Prostate gland (tissue), 2 donors: ENCODE measurements at regions of chr2 and their contacts with region 1.

Region 1: DNA sequence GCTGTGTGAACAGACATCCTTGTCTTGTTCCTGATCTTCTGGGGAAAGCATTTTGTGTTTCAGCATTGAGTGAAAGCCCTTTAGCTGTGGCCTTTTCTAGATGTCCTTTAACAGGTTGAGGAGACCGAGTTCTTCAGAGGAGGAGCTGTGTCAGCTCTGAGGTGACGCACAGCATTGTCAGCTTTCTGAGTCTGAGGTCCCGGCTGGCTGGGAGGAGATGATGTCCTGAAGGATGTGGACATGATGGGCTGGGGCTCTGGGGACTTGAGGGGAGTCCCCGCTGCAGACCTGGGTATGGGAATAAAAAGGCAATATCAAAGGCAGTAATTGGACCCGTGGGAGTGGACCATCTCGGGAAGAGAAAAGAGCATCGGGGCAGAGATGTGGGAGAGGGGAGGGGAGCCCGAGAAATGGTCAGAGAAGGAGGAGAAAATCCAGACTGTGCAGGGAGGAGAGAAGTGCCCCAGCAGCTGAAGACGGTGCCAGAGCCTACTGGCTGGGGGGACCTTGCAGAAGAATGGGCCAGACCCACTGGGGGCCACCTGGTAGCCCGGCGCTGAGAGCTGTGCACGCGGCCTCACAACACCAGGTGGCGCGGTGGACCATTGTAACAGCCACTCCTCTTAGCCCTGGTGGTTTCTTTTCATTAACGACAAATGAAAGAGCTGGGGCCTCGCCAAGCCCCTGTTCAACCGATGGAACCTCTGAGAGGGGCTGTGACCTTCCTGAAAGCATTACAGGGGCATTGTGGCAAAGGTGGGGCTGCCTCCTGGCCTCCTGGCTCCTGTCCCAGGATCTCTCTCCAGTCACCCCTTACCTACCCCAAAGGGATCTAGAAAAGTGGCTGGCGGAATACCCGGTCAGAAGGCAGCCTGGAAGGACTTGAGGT is 61.6 kb downstream of the ST3GAL5 start:
- DNase-seq: peak; percentile 63
- H3K4me3 ChIP-seq: no peak overlapping the region
- H3K27ac ChIP-seq: no peak overlapping the region
- H3K4me1 ChIP-seq: no peaks in the 10 kb centered on the region
- H3K27me3 ChIP-seq: no peaks in the 10 kb centered on the region
- CTCF ChIP-seq: peak; percentile 66 to 94 (median 92)
- POLR2A ChIP-seq: no peak

Region 2: GRCh38 chr2:85678794-85679672 is 148.2 kb before region 1 on chr2:
- intact Hi-C with region 1: no loop called
- DNase-seq: peak; percentile 91
- H3K4me3 ChIP-seq: no peak overlapping the region
- H3K27ac ChIP-seq: no peak overlapping the region
- H3K4me1 ChIP-seq: no peaks in the 10 kb centered on the region
- H3K27me3 ChIP-seq: no peaks in the 10 kb centered on the region
- CTCF ChIP-seq: peak; percentile 90 to 97 (median 95)
- POLR2A ChIP-seq: no peak

Region 3: GRCh38 chr2:86079981-86080911 is 253.0 kb after region 1 on chr2:
- intact Hi-C with region 1: loop called (anchors 1 kb)
- DNase-seq: peak; percentile 70
- H3K4me3 ChIP-seq: no peak overlapping the region
- H3K27ac ChIP-seq: no peak overlapping the region
- H3K4me1 ChIP-seq: peaks cover 4% of the 10 kb centered on the region
- H3K27me3 ChIP-seq: no peaks in the 10 kb centered on the region
- CTCF ChIP-seq: peak; percentile 48 to 85 (median 73)
- POLR2A ChIP-seq: no peak